Ascending aorta (tissue), 2 donors: ENCODE measurements at regions of chr5 and their contacts with region 1.

Region 1: DNA sequence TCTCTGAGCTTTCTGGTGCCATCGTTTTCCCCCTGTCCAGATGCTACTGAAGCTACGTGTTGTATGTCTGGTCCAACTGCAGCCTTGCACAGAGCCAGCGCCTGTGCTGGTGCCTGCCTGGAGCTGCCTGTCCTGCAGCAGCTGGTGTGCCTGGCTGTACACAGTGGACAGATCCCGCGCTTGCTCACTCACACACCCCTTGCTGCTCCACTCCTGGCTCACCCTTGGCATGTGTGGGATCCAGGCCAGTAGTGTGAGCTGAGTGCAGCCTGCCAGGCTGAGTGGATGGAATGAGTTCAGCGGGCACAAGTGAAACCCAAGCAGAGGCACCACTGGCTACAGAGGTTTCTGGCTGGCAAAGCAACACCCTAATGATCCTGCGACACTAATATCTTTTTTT is 40.4 kb downstream of the FER start:
- DNase-seq: peak; percentile 17 to 86
- H3K4me3 ChIP-seq: no peak overlapping the region
- H3K27ac ChIP-seq: no peak overlapping the region
- H3K4me1 ChIP-seq: no peaks in the 10 kb centered on the region
- H3K27me3 ChIP-seq: no peaks in the 10 kb centered on the region
- CTCF ChIP-seq: no peak

Region 2: GRCh38 chr5:108515517-108516105 is 272.5 kb before region 1 on chr5:
- intact Hi-C with region 1: no loop called
- DNase-seq: no peak
- H3K4me3 ChIP-seq: no peak overlapping the region
- H3K27ac ChIP-seq: no peak overlapping the region
- H3K4me1 ChIP-seq: no peaks in the 10 kb centered on the region
- H3K27me3 ChIP-seq: no peaks in the 10 kb centered on the region
- CTCF ChIP-seq: no peak

Region 3: DNA sequence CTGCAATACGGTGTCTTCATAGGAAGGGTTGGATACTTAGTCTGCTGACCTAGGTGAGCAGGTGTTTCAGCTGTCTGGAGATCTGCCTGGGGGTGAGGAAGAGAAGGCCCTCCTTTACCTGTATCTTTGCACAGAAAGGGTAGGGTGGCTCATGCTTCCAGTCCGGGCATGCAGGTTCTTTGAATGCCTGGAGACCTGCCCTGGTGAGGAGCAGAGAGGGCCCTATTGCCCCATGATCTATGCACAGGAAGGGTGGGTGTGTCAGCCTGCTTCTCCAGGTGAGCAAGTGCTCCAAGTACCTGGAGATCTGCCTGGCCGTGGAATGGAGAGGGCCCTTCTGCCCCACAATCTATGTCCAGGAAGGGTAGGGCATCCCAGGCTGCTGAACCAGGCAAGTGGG is 22.6 kb after region 1 on chr5:
- intact Hi-C with region 1: loop called (anchors 2 kb)
- DNase-seq: no peak
- H3K4me3 ChIP-seq: no peak overlapping the region
- H3K27ac ChIP-seq: no peak overlapping the region
- H3K4me1 ChIP-seq: no peaks in the 10 kb centered on the region
- H3K27me3 ChIP-seq: no peaks in the 10 kb centered on the region
- CTCF ChIP-seq: no peak